HepG2 (cell line): ENCODE measurements at regions of chr13 and their contacts with region 1.

Region 1: DNA sequence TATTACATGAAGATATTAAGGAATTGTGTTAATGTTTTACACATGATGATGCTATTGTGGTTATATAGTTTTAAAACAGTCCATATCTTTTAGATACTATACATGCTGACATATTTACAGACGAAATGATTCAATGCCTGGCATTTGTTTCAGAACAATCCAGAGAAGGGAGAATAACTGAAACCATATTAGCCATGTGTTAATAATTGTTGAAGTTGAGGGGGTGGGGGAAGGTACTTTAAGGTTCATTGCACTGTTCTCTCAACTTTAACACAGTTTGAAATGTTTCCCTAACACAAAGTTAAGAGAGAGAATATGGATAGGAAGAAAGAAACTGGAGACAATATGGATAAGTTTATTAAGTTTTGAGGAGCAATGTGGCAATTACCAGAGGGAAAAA is 5.8 kb downstream of the CRYL1 start:
- DNase-seq: no peak
- ATAC-seq: peak; percentile 40; the same call in 1 of the 3 replicates
- H3K4me3 ChIP-seq: no peak overlapping the region
- H3K27ac ChIP-seq: peak overlapping the region; percentile 56
- H3K4me1 ChIP-seq: peaks cover 69% of the 10 kb centered on the region
- H3K27me3 ChIP-seq: no peaks in the 10 kb centered on the region; a peak in 1 of 5 replicates
- CTCF ChIP-seq: no peak
- EP300 ChIP-seq: no peak
- POLR2A ChIP-seq: no peak
- RAD21 ChIP-seq: no peak

Region 2: DNA sequence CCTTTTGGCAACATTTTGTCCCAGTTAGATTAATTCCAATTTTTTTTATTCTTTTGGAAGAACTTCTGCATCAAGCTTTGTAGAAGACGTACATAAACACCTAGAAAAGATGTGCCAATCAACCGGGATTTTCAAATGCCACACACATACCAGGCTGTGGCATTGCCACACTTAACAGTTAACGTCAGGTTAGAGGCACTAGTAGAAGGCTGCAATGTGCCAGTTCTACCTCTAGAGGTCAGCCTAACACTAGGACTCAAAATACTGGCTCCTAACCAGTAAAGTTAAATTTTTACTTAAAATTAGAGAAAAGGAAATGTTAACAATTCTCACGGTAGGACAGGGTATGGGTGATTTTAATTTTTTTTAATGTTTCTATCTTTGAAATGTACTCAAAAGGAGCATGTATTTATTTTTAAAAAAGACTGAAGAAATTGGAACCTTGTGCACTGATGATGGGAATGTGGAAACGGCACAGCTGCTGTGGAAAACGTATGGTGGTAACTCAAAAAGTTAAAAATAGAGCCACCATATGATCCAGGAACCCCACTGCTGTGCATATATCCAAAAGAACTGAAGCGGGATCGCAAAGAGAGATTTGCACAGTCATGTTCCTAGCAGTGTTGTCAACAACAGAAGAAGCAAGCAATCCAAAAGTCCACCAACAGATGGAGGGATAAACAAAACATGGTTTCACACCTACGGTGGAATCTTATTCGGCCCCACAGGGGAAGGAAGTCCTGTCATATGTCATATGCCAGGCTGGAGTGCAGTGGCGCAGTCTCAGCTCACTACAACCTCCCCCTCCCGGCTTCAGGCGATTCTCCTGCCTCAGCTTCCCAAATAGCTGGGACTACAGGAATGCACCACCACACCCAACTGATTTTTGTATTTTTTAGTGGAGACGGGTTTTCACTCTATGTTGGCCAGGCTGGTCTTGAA is 24.5 kb before region 1 on chr13:
- CTCF ChIA-PET with region 1: no interaction called
- POLR2A ChIA-PET with region 1: no interaction called
- in situ Hi-C with region 1: no loop called
- intact Hi-C with region 1: no loop called
- DNase-seq: peak; percentile 66
- ATAC-seq: peak; percentile 70
- H3K4me3 ChIP-seq: peak overlapping the region in 2 of 3 experiments; percentile 32 to 34; a peak in 3 of 6 replicates
- H3K27ac ChIP-seq: peak overlapping the region; percentile 73
- H3K4me1 ChIP-seq: peaks cover 45% of the 10 kb centered on the region
- H3K27me3 ChIP-seq: no peaks in the 10 kb centered on the region
- CTCF ChIP-seq: peak; percentile 84
- EP300 ChIP-seq: peak in 1 of 2 experiments; percentile 15; a peak in 1 of 4 replicates
- POLR2A ChIP-seq: 0 out of 4 replicates have a peak, but pooled peaks of 1 of the 2 experiments have one; percentile 19
- RAD21 ChIP-seq: peak; percentile 77

Region 3: DNA sequence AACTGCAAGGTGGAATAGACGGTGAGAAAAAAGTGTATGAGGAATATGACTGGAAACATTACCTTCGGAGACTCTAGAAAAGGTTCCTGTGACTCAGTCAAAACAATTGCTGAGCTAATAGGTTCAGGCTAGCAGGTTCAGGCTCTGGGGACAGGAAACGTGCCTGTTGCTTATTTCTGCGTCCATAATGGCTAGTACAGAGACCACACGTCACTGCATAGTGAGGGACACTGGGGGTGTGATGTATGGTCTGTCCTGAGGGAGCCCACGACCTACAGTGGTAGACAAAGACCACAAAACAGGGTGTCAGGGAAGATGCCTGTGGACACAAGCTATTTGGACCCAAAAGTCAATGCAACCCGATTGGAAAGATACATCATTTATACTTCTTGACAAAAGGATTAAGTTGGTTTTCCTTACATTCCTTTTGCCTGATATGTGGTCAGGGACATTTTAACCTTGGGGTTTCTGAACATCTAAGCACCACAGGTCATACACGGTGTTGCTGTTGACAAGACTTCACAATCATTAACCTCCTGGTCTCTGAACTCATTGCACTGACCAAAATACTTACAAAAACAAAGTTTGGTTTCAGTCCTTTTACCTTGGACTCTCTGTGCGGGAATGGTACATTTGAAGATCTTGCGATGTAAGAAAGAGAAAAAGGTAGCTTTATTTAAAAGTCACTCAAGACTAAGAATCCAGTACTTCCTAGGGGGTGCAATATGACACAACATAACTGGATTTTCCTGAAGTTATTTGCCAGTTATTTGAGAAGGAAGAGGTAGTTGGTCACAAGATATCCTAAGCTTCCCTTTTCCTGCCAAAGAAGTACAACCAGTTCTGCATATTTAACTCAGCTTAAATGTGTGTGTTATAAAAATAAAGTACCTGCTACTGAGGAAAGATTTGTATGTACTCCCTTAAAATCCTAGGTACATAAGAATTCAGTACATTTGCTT is 14.2 kb before region 1 on chr13:
- CTCF ChIA-PET with region 1: no interaction called
- POLR2A ChIA-PET with region 1: interaction called, 7 read pairs
- in situ Hi-C with region 1: no loop called
- intact Hi-C with region 1: loop called (anchors 2 kb)
- DNase-seq: peak; percentile 95
- ATAC-seq: peak; percentile 97
- H3K4me3 ChIP-seq: peak overlapping the region; percentile 2 to 36 (median 28); a peak in 3 of 6 replicates
- H3K27ac ChIP-seq: peak overlapping the region; percentile 84
- H3K4me1 ChIP-seq: peaks cover 67% of the 10 kb centered on the region
- H3K27me3 ChIP-seq: no peaks in the 10 kb centered on the region
- CTCF ChIP-seq: no peak
- EP300 ChIP-seq: peak; percentile 12 to 90; a peak in 2 of 4 replicates
- POLR2A ChIP-seq: peak; percentile 30 to 39; a peak in 3 of 4 replicates
- RAD21 ChIP-seq: no peak